ENCODE measurements at regions of chr3 and their contacts with region 1.

Region 1: GRCh38 chr3:141011232-141011996 is 39.7 kb upstream of the SPSB4 start:
- DNase-seq: peak; percentile 73
- CTCF ChIP-seq: peak; percentile 83

Region 2: GRCh38 chr3:141192345-141192744 is 180.9 kb after region 1 on chr3:
- in situ Hi-C with region 1: loop called (anchors 10 kb)
- DNase-seq: peak; percentile 79
- CTCF ChIP-seq: peak; percentile 93